Left ventricle myocardium superior (tissue), 1 donor: ENCODE measurements at regions of chr15 and their contacts with region 1.

Region 1: GRCh38 chr15:98416222-98416855 is 232.0 kb upstream of the IGF1R start:
- DNase-seq: no peak
- ATAC-seq: peak; percentile 15

Region 2: DNA sequence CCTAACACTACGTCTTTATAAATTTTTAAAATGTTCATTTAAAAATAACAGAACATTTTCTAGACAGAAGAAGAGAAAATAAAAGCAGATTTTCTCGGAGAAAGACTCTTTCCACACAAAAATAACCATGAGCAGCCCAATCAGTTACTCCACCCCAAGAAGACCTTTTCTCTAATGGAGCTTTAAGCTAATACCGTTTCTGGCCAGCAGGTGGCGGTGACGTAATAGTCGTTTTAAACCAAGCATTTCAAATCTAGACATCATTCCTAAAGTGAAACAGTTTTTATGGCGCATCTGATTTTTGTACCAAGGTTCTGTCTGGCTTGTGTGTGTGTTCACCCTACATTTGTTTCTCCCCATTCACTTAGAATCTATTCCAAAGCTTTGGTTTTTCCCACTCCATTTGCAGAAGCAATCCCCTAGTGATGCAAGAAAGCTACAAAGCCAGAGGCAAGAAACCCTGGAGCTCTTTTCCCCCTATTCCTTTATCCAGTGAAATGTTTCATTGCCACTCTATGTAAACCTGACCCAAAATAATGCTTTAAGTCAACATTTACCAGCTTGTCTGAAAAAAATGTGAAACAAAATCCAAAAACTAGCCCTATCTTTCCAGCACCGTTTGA is 104.7 kb before region 1 on chr15:
- intact Hi-C with region 1: loop called (anchors 5 kb)
- DNase-seq: peak; percentile 74
- ATAC-seq: peak; percentile 48

Region 3: DNA sequence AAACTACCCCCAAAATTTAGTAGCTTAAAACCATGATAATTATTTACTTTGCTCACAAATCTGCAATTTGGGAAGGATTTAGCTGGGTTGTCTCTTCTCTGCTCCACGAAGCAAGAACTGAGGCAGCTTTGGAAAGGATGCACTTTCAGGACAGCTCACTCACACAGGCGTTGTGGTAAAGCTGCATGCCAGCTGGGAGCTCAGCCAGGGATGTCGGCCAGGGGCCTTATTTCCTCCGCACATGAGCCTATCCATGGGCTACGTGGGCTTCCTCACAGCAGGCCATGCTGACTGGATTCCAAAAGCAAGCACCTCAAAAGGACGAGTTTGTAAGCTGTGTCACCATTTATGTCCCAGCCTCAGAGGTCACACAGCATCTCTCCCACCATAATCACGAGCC is 69.3 kb before region 1 on chr15:
- intact Hi-C with region 1: no loop called
- DNase-seq: peak; percentile 45
- ATAC-seq: no peak